Activated CD4-positive, alpha-beta T cell treated with anti-CD3 and anti-CD28 coated beads, Interleukin-2, amount 10 ng/mL, durations not matched to agents 24 days and 14 days (primary cell): ENCODE measurements at regions of chr5 and their contacts with region 1.

Region 1: GRCh38 chr5:6377905-6378765 is at the start of gene MED10:
- DNase-seq: peak; percentile 98
- H3K4me3 Mint-ChIP-seq: peak within 1 kb of the TSS; percentile 100
- H3K27ac Mint-ChIP-seq: peak within 1 kb of the TSS; percentile 98
- H3K4me1 Mint-ChIP-seq: peaks cover 46% of the 10 kb centered on the region
- H3K27me3 Mint-ChIP-seq: peaks cover 5% of the 10 kb centered on the region
- total RNA-seq, gene MED10: 58.0 and 63.8 TPM in 2 replicates

Region 2: GRCh38 chr5:5421961-5422818 is 955.9 kb before region 1 on chr5 and contains the start of gene ICE1:
- intact Hi-C with region 1: loop called (anchors 1 kb)
- DNase-seq: peak; percentile 98
- H3K4me3 Mint-ChIP-seq: peak within 1 kb of the TSS; percentile 97
- H3K27ac Mint-ChIP-seq: peak within 1 kb of the TSS; percentile 98
- H3K4me1 Mint-ChIP-seq: peaks cover 22% of the 10 kb centered on the region
- H3K27me3 Mint-ChIP-seq: no peaks in the 10 kb centered on the region
- total RNA-seq, gene ICE1: 35.6 and 36.9 TPM in 2 replicates

Region 3: GRCh38 chr5:6261668-6262067 is 116.5 kb before region 1 on chr5:
- intact Hi-C with region 1: loop called (anchors 1 kb)
- DNase-seq: peak; percentile 67
- H3K4me3 Mint-ChIP-seq: peak overlapping the region; percentile 56
- H3K27ac Mint-ChIP-seq: peak overlapping the region; percentile 92
- H3K4me1 Mint-ChIP-seq: peaks cover 21% of the 10 kb centered on the region
- H3K27me3 Mint-ChIP-seq: no peaks in the 10 kb centered on the region

Region 4: DNA sequence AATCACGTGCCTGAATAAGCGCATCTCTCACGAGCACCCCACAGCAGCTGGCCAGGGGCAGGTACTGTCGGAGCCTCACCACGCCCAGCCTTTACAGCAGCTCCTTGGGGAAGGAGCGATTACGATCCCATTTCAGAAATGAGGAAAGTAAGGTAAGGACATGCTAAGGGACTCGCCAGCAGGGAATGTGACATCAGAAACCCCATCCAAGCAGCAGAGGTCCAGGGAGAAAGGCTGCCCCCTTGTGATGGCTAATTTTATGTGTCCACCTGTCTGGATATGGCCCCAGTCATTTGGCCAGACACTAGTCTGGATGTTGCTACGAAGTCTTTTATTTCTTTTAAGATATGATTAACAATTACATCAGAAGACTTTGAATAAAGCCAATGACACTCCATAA is 147.8 kb after region 1 on chr5:
- intact Hi-C with region 1: no loop called
- DNase-seq: no peak
- H3K4me3 Mint-ChIP-seq: no peak overlapping the region
- H3K27ac Mint-ChIP-seq: no peak overlapping the region
- H3K4me1 Mint-ChIP-seq: no peaks in the 10 kb centered on the region
- H3K27me3 Mint-ChIP-seq: peaks cover 2% of the 10 kb centered on the region

Region 5: DNA sequence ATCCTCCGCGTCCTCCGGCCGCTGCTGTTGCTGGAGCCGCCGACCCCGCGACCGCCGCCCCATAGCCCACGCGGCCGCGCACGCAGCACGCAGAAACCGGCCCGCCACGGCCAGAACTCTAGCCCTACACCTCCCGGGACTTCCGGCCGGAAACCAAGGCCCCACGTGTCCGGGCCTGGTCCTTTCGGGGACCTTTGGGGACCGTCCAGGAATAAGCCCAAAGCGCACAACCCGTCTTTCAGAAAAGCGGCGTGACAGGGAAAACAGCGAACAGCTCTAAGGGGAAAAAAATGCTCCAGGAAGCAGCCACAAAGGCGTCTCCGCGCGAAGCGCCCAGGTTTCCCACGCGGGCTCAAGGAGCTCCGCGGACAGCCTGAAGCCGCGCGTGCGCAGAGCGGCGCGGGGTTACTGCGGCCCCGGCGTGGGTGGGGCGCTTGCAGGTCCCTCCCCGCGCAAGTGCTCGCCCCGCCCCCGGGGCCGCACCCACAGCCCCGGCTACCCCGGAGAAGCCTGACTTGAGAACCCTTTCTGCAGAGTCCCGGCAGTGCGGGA is 254.9 kb after region 1 on chr5 and contains the starts of genes NSUN2 and SRD5A1:
- intact Hi-C with region 1: loop called (anchors 1 kb)
- DNase-seq: peak; percentile 97
- H3K4me3 Mint-ChIP-seq: peak within 1 kb of the TSS; percentile 100
- H3K27ac Mint-ChIP-seq: peak within 1 kb of the TSS; percentile 99
- H3K4me1 Mint-ChIP-seq: peaks cover 40% of the 10 kb centered on the region
- H3K27me3 Mint-ChIP-seq: no peaks in the 10 kb centered on the region
- total RNA-seq, gene NSUN2: 138 and 140 TPM in 2 replicates
- total RNA-seq, gene SRD5A1: 14.8 and 16.6 TPM in 2 replicates

Region 6: GRCh38 chr5:6712577-6713275 is 334.6 kb after region 1 on chr5:
- intact Hi-C with region 1: loop called (anchors 1 kb)
- DNase-seq: peak; percentile 99
- H3K4me3 Mint-ChIP-seq: peak overlapping the region; percentile 89
- H3K27ac Mint-ChIP-seq: peak overlapping the region; percentile 97
- H3K4me1 Mint-ChIP-seq: peaks cover 35% of the 10 kb centered on the region
- H3K27me3 Mint-ChIP-seq: no peaks in the 10 kb centered on the region

Region 7: GRCh38 chr5:7868773-7869473 is 1490.8 kb after region 1 on chr5 and contains the starts of genes FASTKD3 and MTRR:
- intact Hi-C with region 1: loop called (anchors 10 kb)
- DNase-seq: peak; percentile 97
- H3K4me3 Mint-ChIP-seq: peak within 1 kb of the TSS; percentile 99
- H3K27ac Mint-ChIP-seq: peak within 1 kb of the TSS; percentile 92
- H3K4me1 Mint-ChIP-seq: peaks cover 64% of the 10 kb centered on the region
- H3K27me3 Mint-ChIP-seq: no peaks in the 10 kb centered on the region
- total RNA-seq, gene FASTKD3: 17.7 and 18.3 TPM in 2 replicates
- total RNA-seq, gene MTRR: 64.4 and 76.8 TPM in 2 replicates